ENCODE measurements at regions of chr4 and their contacts with region 1.

Region 1: GRCh38 chr4:175560604-175561003 is 251.5 kb downstream of the GPM6A start:
- ATAC-seq: peak in 6 of 8 experiments; percentile 47 to 92 (median 60)
- H3K4me3 ChIP-seq: no peak overlapping the region
- H3K27ac ChIP-seq: no peak overlapping the region
- H3K4me1 ChIP-seq: no peaks in the 10 kb centered on the region

Region 2: DNA sequence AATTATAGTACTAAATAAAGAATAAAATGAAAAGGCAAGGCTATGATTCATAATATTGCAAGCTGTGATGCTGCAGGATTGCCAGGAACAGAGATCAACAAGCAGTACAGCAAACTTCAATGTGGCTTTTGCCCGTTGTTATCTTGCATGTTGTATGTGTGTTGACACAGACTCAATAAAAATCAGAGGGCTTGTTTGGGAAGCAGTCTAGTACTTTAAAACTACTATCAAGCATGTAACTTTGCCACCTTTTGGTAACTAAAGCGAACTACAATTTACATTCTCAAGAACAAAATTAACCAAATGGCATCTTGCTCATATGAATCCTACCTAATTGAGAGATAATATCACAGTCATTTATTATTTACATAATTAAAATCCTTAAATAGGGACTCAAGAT is 331.2 kb after region 1 on chr4:
- in situ Hi-C with region 1: loop called in 7 of 9 experiments (anchors 10 to 25 kb)
- ATAC-seq: peak in 4 of 8 experiments; percentile 27 to 80 (median 56)
- H3K4me3 ChIP-seq: no peak overlapping the region
- H3K27ac ChIP-seq: no peak overlapping the region
- H3K4me1 ChIP-seq: no peaks in the 10 kb centered on the region

Region 3: GRCh38 chr4:176150356-176150682 is 589.7 kb after region 1 on chr4:
- in situ Hi-C with region 1: loop called in 1 of 9 experiments (anchors 25 kb)
- ATAC-seq: peak in 3 of 8 experiments; percentile 57 to 67 (median 64)
- H3K4me3 ChIP-seq: no peak overlapping the region
- H3K27ac ChIP-seq: no peak overlapping the region
- H3K4me1 ChIP-seq: no peaks in the 10 kb centered on the region